Natural killer cell (primary cell): ENCODE measurements at regions of chr2 and their contacts with region 1.

Region 1: DNA sequence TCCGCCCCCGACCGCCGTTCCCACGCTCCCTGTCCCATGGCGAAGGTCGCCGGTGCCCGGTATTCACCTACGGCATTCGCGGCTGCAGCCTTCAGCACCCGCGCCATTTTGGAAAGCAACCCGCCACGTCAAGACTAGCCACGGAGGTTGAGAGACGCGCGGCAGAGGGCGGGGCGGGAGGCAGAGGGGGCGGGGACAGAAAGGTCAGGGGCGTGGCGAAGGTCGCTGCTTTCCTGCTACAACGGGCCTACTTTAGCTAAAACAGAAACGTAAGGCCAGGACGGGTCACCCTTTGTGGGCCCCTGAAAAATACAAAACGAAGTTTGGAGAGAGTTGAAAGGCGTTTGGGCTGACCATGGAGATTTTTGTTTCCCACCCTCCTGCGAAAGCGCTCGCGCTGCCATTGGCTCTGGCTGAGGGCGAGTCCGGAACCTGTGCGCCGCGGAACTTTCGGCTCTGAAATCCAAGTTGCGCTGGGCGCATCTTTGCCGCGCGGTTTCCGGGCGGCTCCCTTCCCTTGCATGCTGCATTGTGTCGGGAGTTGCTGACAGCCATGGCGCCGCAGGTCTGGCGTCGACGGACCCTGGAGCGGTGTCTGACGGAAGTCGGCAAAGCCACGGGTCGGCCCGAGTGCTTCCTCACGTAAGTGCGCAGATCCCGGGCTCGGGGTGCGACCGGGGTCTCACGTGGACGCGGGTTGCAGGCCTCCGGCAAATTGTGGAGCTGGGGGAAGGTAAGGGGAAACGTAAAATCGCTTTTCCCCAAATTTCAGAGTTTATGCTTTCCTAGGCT is at the starts of genes MCEE and MPHOSPH10:
- DNase-seq: peak; percentile 82 to 93
- ATAC-seq: peak; percentile 91 to 97 (median 91)
- H3K4me3 ChIP-seq: peak within 1 kb of the TSS; percentile 89
- H3K4me3 Mint-ChIP-seq: no peak within 1 kb of the TSS
- H3K27ac ChIP-seq: peak within 1 kb of the TSS; percentile 80
- H3K27ac Mint-ChIP-seq: no peak within 1 kb of the TSS
- H3K4me1 ChIP-seq: peaks cover 17% of the 10 kb centered on the region
- H3K4me1 Mint-ChIP-seq: peaks cover 8 to 13% of the 10 kb centered on the region in 2 donors
- H3K27me3 ChIP-seq: no peaks in the 10 kb centered on the region
- H3K27me3 Mint-ChIP-seq: no peaks in the 10 kb centered on the region
- CTCF ChIP-seq: no peak
- total RNA-seq, gene MCEE: 8.4 to 10.4 (median 8.7) TPM
- total RNA-seq, gene MPHOSPH10: 27.9 to 34.2 (median 31.4) TPM

Region 2: DNA sequence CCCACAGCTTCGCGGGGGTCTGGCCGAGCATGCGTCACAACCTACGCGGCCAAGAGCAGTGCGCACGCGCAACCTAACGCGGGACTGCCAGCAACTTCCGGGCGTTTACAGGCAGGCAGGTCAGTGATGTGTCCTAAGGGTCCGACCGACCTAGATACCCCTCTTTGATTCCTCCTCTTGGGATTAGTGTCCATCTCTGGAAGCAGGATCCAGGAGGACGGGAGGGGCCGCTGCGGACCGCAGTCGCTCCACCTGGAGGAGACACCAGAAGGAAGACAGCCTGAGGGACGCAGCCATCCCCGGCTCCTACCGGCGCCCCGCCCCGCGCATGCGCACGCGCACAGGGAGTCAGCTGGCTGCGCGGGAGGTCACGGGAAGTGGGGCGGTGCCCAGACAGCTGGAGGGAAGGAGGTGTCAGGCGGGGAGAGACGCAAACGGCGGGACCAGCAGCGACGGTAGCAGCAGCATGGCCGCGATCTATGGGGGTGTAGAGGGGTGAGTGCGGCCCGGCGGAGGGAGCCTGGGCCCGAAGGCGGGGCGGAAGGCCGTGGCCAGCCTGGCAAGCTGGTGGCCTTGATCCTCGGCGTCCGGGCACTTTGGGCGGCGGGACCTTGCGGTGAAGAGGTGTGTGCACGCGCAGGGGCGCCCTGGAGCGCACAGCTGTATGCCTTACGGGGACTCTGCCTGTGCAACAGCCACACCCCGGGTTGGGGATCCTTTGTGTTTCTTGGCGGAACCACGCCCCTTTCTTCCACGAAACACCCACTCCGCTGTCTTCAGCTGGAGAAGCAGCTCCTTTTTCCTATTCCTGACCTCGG is 61.9 kb before region 1 on chr2 and contains the start of gene NAGK:
- intact Hi-C with region 1: loop called (anchors 2 kb)
- DNase-seq: peak; percentile 98 to 99
- ATAC-seq: peak; percentile 83 to 93 (median 88)
- H3K4me3 ChIP-seq: peak within 1 kb of the TSS; percentile 80
- H3K4me3 Mint-ChIP-seq: peak within 1 kb of the TSS; percentile 97
- H3K27ac ChIP-seq: peak within 1 kb of the TSS; percentile 93
- H3K27ac Mint-ChIP-seq: peak within 1 kb of the TSS; percentile 98 to 99
- H3K4me1 ChIP-seq: peaks cover 49% of the 10 kb centered on the region
- H3K4me1 Mint-ChIP-seq: peaks cover 55% of the 10 kb centered on the region in 2 donors
- H3K27me3 ChIP-seq: no peaks in the 10 kb centered on the region
- H3K27me3 Mint-ChIP-seq: peaks cover 2 to 8% of the 10 kb centered on the region in 2 donors
- CTCF ChIP-seq: no peak
- total RNA-seq, gene NAGK: 67.3 to 93.6 (median 74.9) TPM